ENCODE measurements at regions of chr10 and their contacts with region 1.

Region 1: DNA sequence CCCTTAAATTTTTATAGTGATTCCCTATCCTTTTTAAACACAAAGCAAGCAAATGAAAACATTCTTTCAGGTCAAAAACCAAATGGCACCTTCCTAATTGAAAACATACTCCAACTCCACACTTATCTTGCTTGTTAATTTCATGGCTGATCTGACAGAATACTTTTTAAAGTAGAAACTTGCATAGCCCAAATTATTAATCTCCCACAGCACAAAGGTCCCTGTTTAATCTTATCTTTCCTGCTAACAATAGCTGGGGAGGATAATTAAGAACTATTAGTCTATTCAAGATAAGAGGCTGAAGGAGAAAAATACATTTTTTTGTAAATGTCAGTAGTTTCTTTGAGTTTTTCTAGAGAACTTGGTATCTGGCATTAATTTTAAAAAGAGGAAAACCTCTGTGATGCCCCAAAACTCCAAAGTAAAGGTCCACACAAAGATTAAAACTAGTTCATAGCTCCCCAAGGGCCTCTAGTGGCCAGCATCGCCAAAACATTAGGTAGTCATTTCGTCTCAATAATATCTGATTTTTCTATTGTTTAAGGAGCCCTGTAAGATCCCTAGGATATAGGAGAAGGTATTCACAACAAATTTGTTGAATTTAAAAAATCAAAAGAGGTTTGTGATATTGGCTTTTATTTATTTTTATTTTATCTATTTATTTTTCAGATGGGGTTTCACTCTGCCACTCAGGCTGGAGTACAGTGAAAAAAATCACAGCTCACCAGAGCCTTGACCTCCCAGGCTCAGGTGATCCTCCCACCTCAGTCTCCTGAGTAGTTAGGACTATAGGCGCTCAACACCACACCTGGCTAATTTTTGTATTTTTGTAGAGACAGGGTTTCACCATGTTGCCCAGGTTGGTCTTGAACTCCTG is 14.7 kb downstream of the CDNF start:
- DNase-seq: no peak
- H3K4me3 ChIP-seq: no peak overlapping the region
- H3K27ac ChIP-seq: no peak overlapping the region
- H3K4me1 ChIP-seq: peaks cover 0 to 3% of the 10 kb centered on the region in 2 donors
- H3K27me3 ChIP-seq: no peaks in the 10 kb centered on the region
- CTCF ChIP-seq: peak; percentile 37 to 55 (median 49)

Region 2: DNA sequence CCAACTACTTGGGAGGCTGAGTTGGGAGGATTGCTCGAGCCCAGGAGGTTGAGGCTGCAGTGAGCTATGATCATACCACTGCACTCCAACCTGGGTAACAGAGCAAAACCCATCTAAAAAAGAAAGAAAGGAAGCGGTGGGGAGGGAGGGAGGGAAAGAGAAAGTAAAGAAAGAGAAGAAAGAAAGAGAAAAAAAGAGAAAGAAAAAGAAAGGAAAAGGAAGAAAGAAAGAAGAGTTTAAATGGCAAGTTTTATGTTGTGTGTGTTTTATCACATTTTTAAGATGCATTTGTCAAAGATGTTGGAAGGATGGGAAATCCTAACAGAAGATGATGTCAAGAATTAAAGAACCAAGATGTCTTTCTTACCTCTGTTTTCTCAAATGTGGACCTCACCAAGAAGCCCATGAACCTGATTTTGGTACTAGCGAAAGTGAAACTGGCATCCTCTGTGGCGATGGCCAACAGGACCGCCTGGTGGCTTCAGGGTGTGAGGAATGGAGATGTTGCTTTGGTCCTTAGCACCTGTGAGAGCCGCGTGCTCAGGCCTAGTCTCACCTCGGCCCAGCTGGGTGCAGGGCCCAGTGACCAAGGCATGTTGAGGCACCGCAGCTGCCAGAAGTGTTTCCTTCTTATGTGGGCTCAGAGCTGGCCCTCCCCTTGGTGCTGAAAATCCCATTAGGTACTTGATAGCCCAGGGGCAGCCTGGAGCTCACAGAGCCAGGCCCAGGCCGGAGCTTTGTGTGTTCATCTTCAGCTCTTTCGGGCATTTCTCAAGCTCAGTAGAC is 1598.7 kb before region 1 on chr10:
- intact Hi-C with region 1: no loop called
- DNase-seq: peak in 1 of 2 donors; percentile 39
- H3K4me3 ChIP-seq: no peak overlapping the region
- H3K27ac ChIP-seq: no peak overlapping the region
- H3K4me1 ChIP-seq: peaks cover 0 to 4% of the 10 kb centered on the region in 2 donors
- H3K27me3 ChIP-seq: no peaks in the 10 kb centered on the region
- CTCF ChIP-seq: no peak

Region 3: GRCh38 chr10:14536241-14537213 is 286.6 kb before region 1 on chr10:
- intact Hi-C with region 1: loop called (anchors 5 kb)
- DNase-seq: peak in 1 of 2 donors; percentile 80
- H3K4me3 ChIP-seq: peak overlapping the region in 1 of 2 donors; percentile 46
- H3K27ac ChIP-seq: peak overlapping the region; percentile 28 to 42
- H3K4me1 ChIP-seq: no peaks in the 10 kb centered on the region
- H3K27me3 ChIP-seq: no peaks in the 10 kb centered on the region
- CTCF ChIP-seq: peak; percentile 39 to 56 (median 55)

Region 4: GRCh38 chr10:14751014-14751896 is 71.9 kb before region 1 on chr10:
- intact Hi-C with region 1: loop called (anchors 5 kb)
- DNase-seq: peak in 1 of 2 donors; percentile 79
- H3K4me3 ChIP-seq: no peak overlapping the region
- H3K27ac ChIP-seq: peak overlapping the region; percentile 56 to 73
- H3K4me1 ChIP-seq: peaks cover 9 to 40% of the 10 kb centered on the region in 2 donors
- H3K27me3 ChIP-seq: no peaks in the 10 kb centered on the region
- CTCF ChIP-seq: no peak